Caco-2 (cell line): ENCODE measurements at regions of chr6 and their contacts with region 1.

Region 1: DNA sequence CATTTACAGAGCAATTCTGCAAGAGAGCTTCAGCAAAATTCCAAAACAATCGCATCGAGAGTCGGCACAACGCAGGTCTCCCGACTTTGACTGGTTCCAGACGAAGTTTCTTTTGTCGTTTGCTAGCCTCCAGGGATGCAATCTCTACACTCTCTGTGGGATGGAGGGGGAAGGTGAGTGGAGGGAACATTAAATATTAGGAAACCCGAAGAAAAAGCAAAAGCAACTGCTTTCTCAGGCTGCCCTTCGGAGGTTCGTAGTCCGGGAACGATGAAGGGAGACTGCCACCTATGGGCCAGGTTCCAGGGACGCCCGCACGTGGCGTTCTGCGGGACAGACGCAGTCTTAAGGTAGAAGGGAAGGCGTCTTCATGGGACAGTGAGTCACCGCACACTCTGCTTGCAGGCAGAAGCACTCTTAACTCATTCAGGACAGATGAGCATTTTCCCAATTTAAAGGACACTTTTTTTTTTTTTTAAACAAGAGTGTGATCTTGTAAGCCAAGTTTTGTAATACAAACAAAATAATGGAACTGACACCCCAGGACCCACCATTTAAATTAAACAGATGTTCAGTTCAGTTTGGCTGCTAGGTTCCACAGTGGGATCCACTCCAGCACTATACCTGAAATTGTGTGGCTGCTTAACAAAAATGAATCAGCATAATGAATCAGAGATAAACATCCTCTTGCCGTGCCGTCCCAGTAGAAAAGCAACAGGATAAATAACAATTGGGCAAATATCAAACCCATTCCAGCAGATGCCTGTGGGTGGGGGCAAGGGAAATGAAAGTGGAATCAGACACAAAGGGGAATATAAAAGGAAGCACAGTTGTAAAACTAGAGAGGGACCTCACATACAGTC is 65.8 kb upstream of the ARMC2 start:
- DNase-seq: peak; percentile 84 to 86
- H3K4me3 ChIP-seq: peak overlapping the region; percentile 30
- H3K4me3 Mint-ChIP-seq: peak overlapping the region; percentile 69
- H3K27ac Mint-ChIP-seq: no peak overlapping the region
- H3K4me1 ChIP-seq: 0 out of 2 replicates have a peak, but pooled peaks cover 7% of the 10 kb centered on the region
- H3K4me1 Mint-ChIP-seq: peaks cover 21% of the 10 kb centered on the region
- H3K27me3 ChIP-seq: no peaks in the 10 kb centered on the region
- H3K27me3 Mint-ChIP-seq: no peaks in the 10 kb centered on the region
- CTCF ChIP-seq: peak; percentile 72 to 92

Region 2: DNA sequence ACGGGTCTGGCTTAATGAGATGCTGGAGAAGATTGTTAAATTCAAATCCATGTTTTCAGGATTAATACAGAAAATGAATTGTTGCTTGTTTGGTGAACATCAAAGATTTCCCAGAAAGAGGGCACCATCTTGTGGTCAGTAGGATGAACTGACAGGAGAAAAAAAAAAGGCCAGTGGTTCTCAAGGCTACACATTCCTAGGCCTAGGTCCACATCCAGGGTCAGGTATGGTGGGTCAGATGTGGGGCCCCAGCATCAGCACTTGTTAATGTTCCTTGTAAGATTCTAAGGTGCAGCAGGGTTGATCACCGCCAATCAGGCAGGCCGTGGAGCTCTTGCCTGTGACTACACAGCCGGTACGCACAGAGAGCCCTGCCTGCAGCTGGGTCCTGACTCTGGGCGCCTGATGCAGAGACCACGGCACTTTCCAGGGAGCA is 255.7 kb before region 1 on chr6:
- CTCF ChIA-PET with region 1: no interaction called
- POLR2A ChIA-PET with region 1: no interaction called
- intact Hi-C with region 1: no loop called
- DNase-seq: peak in 1 of 2 experiments; percentile 31
- H3K4me3 ChIP-seq: no peak overlapping the region
- H3K4me3 Mint-ChIP-seq: no peak overlapping the region
- H3K27ac Mint-ChIP-seq: no peak overlapping the region
- H3K4me1 ChIP-seq: peaks cover 8% of the 10 kb centered on the region
- H3K4me1 Mint-ChIP-seq: peaks cover 9% of the 10 kb centered on the region
- H3K27me3 ChIP-seq: no peaks in the 10 kb centered on the region
- H3K27me3 Mint-ChIP-seq: no peaks in the 10 kb centered on the region
- CTCF ChIP-seq: peak; percentile 69 to 78

Region 3: GRCh38 chr6:108541838-108542759 is 240.3 kb before region 1 on chr6:
- CTCF ChIA-PET with region 1: no interaction called
- POLR2A ChIA-PET with region 1: no interaction called
- intact Hi-C with region 1: loop called (anchors 1 kb)
- DNase-seq: peak; percentile 67 to 74
- H3K4me3 ChIP-seq: peak overlapping the region; percentile 1; the same call in 1 of the 2 replicates
- H3K4me3 Mint-ChIP-seq: peak overlapping the region; percentile 55
- H3K27ac Mint-ChIP-seq: no peak overlapping the region
- H3K4me1 ChIP-seq: no peaks in the 10 kb centered on the region
- H3K4me1 Mint-ChIP-seq: no peaks in the 10 kb centered on the region
- H3K27me3 ChIP-seq: no peaks in the 10 kb centered on the region
- H3K27me3 Mint-ChIP-seq: no peaks in the 10 kb centered on the region
- CTCF ChIP-seq: peak; percentile 76 to 85